ENCODE measurements at regions of chr13 and their contacts with region 1.

Region 1: GRCh38 chr13:52450012-52450792 is at the start of gene VPS36:
- DNase-seq: peak; percentile 95
- ATAC-seq: peak; percentile 81
- H3K4me3 Mint-ChIP-seq: peak within 1 kb of the TSS; percentile 87
- H3K27ac Mint-ChIP-seq: peak within 1 kb of the TSS; percentile 91
- H3K4me1 Mint-ChIP-seq: peaks cover 36% of the 10 kb centered on the region
- H3K27me3 Mint-ChIP-seq: no peaks in the 10 kb centered on the region
- total RNA-seq, gene VPS36: 39.1 to 43.2 TPM

Region 2: GRCh38 chr13:52194184-52194868 is 255.9 kb before region 1 on chr13:
- CTCF ChIA-PET with region 1: interaction called, 11 read pairs
- POLR2A ChIA-PET with region 1: interaction called, 5 read pairs
- DNase-seq: peak; percentile 90
- ATAC-seq: peak; percentile 90
- H3K4me3 Mint-ChIP-seq: peak overlapping the region; percentile 97
- H3K27ac Mint-ChIP-seq: peak overlapping the region; percentile 97
- H3K4me1 Mint-ChIP-seq: peaks cover 23% of the 10 kb centered on the region
- H3K27me3 Mint-ChIP-seq: no peaks in the 10 kb centered on the region

Region 3: GRCh38 chr13:52348983-52349780 is 101.0 kb before region 1 on chr13:
- CTCF ChIA-PET with region 1: interaction called, 18 read pairs
- POLR2A ChIA-PET with region 1: interaction called, 4 read pairs
- DNase-seq: no peak
- ATAC-seq: no peak
- H3K4me3 Mint-ChIP-seq: no peak overlapping the region
- H3K27ac Mint-ChIP-seq: no peak overlapping the region
- H3K4me1 Mint-ChIP-seq: no peaks in the 10 kb centered on the region
- H3K27me3 Mint-ChIP-seq: peaks cover 10% of the 10 kb centered on the region

Region 4: GRCh38 chr13:52428295-52428694 is 21.9 kb before region 1 on chr13:
- CTCF ChIA-PET with region 1: interaction called, 14 read pairs
- POLR2A ChIA-PET with region 1: no interaction called
- DNase-seq: no peak
- ATAC-seq: no peak
- H3K4me3 Mint-ChIP-seq: no peak overlapping the region
- H3K27ac Mint-ChIP-seq: no peak overlapping the region
- H3K4me1 Mint-ChIP-seq: no peaks in the 10 kb centered on the region
- H3K27me3 Mint-ChIP-seq: no peaks in the 10 kb centered on the region

Measured in activated CD8-positive, alpha-beta T cell treated with anti-CD3 and anti-CD28 coated beads, Interleukin-2, amount 10 ng/mL, durations not matched to agents 7 days and 5 days (primary cell).